ENCODE measurements at regions of chr19 and their contacts with region 1.

Region 1: DNA sequence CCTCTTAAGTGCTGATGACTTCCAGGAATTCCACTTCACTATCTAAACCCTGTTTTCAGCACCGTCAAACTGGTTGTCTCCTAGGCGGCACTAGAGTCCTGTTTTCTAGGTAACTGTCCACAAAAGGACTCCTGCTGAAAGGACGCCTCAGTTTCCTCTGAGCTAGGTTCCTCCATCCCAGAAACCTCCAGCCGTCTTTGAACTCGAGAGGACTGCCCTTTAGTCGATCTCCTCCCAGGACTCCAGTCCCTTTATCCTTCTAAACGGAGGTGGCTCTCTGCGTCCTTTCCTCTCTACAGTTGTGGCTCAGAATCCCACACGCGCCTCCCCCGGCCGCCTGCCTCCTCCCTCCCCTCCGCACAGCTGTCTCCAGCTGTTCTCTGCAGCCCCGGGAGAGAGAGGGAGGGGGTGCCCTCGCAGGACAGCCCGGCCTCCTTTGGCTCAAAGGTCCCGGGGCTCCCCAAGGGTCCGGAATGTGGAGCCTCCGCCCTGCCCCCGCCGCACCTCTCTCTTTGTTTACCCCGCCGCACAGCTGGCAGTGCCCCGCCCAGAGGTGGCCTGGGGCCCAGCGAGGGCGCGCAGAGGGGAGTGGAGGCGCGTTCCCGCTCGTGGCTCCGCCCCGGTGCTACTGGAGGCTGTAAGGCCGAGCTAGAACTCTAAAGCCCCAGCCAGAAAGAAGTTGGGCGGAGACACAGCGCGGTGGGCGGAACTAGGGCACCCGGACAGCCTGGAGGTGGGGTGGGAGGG is 2.4 kb downstream of the LTBP4 start:
- DNase-seq: peak; percentile 76 to 99 (median 88)
- ATAC-seq: peak; percentile 83
- H3K4me3 ChIP-seq: peak overlapping the region; percentile 61
- H3K27ac ChIP-seq: peak overlapping the region; percentile 93
- H3K4me1 ChIP-seq: peaks cover 60 to 95% of the 10 kb centered on the region in 2 experiments
- H3K27me3 ChIP-seq: no peaks in the 10 kb centered on the region
- CTCF ChIP-seq: peak in 2 of 3 experiments; percentile 36 to 46; a peak in 3 of 6 replicates
- EP300 ChIP-seq: no peak
- POLR2A ChIP-seq: no peak
- RAD21 ChIP-seq: peak in 1 of 2 experiments; percentile 47; a peak in 2 of 4 replicates

Region 2: GRCh38 chr19:40633207-40633606 is 29.6 kb after region 1 on chr19:
- CTCF ChIA-PET with region 1: interaction called, 35 read pairs
- POLR2A ChIA-PET with region 1: interaction called, 7 read pairs
- in situ Hi-C with region 1: no loop called
- intact Hi-C with region 1: loop called (anchors 1 kb)
- DNase-seq: no peak
- ATAC-seq: no peak
- H3K4me3 ChIP-seq: no peak overlapping the region
- H3K27ac ChIP-seq: no peak overlapping the region
- H3K4me1 ChIP-seq: peaks cover 5 to 14% of the 10 kb centered on the region in 2 experiments; a peak in 4 of 5 replicates
- H3K27me3 ChIP-seq: no peaks in the 10 kb centered on the region
- CTCF ChIP-seq: no peak
- EP300 ChIP-seq: no peak
- POLR2A ChIP-seq: no peak
- RAD21 ChIP-seq: no peak